ENCODE measurements at regions of chr22 and their contacts with region 1.

Region 1: GRCh38 chr22:31290494-31291471 is 1.5 kb downstream of the PIK3IP1 start:
- DNase-seq: peak; percentile 92
- H3K4me3 Mint-ChIP-seq: peak overlapping the region; percentile 97
- H3K27ac Mint-ChIP-seq: peak overlapping the region; percentile 100
- H3K4me1 Mint-ChIP-seq: peaks cover 65% of the 10 kb centered on the region
- H3K27me3 Mint-ChIP-seq: no peaks in the 10 kb centered on the region

Region 2: GRCh38 chr22:30742291-30743256 is 548.2 kb before region 1 on chr22:
- intact Hi-C with region 1: loop called (anchors 5 kb)
- DNase-seq: no peak
- H3K4me3 Mint-ChIP-seq: peak overlapping the region; percentile 31
- H3K27ac Mint-ChIP-seq: peak overlapping the region; percentile 96
- H3K4me1 Mint-ChIP-seq: peaks cover 65% of the 10 kb centered on the region
- H3K27me3 Mint-ChIP-seq: no peaks in the 10 kb centered on the region

Region 3: GRCh38 chr22:31107178-31107893 is 183.4 kb before region 1 on chr22 and contains the start of gene SELENOM:
- intact Hi-C with region 1: loop called (anchors 5 kb)
- DNase-seq: peak; percentile 83
- H3K4me3 Mint-ChIP-seq: peak within 1 kb of the TSS; percentile 85
- H3K27ac Mint-ChIP-seq: peak within 1 kb of the TSS; percentile 19
- H3K4me1 Mint-ChIP-seq: peaks cover 10% of the 10 kb centered on the region
- H3K27me3 Mint-ChIP-seq: peaks cover 3% of the 10 kb centered on the region
- total RNA-seq, gene SELENOM: 7.9 and 9.4 TPM in 2 replicates

Region 4: GRCh38 chr22:31313366-31314147 is 22.8 kb after region 1 on chr22:
- intact Hi-C with region 1: loop called (anchors 1 kb)
- DNase-seq: peak; percentile 32
- H3K4me3 Mint-ChIP-seq: no peak overlapping the region
- H3K27ac Mint-ChIP-seq: no peak overlapping the region
- H3K4me1 Mint-ChIP-seq: peaks cover 6% of the 10 kb centered on the region
- H3K27me3 Mint-ChIP-seq: no peaks in the 10 kb centered on the region

Region 5: GRCh38 chr22:31363885-31364465 is 73.2 kb after region 1 on chr22:
- intact Hi-C with region 1: no loop called
- DNase-seq: no peak
- H3K4me3 Mint-ChIP-seq: no peak overlapping the region
- H3K27ac Mint-ChIP-seq: no peak overlapping the region
- H3K4me1 Mint-ChIP-seq: peaks cover 3% of the 10 kb centered on the region
- H3K27me3 Mint-ChIP-seq: peaks cover 1% of the 10 kb centered on the region

Region 6: DNA sequence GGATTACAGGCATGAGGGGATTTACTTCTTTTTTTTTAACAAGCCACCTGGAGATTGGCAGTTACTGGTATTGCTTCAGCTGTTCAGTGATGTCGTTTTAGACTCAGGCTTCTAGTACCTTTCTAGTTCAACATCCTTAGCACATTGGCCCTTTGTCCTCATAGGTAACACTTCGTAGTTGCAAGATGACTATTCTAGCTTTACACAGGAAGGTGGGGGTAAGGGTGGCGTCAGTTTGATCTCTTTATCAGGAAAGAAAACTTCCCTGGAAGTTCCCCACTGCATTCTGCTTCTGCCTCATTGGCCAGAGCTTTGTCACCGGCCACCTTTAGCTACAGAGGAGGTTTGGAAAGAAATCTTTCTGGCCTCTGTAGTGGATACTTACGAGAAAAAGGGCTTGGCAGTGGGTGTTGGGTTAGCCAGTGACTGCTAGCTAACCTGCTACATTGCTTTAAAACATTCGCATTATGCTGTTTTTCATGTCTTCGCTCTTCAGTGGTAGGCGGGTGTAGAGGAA is 246.3 kb after region 1 on chr22:
- intact Hi-C with region 1: loop called (anchors 5 kb)
- DNase-seq: peak; percentile 26
- H3K4me3 Mint-ChIP-seq: peak overlapping the region; percentile 64
- H3K27ac Mint-ChIP-seq: peak overlapping the region; percentile 99
- H3K4me1 Mint-ChIP-seq: peaks cover 60% of the 10 kb centered on the region
- H3K27me3 Mint-ChIP-seq: no peaks in the 10 kb centered on the region

Region 7: GRCh38 chr22:31550866-31551390 is 260.1 kb after region 1 on chr22:
- intact Hi-C with region 1: no loop called
- DNase-seq: no peak
- H3K4me3 Mint-ChIP-seq: no peak overlapping the region
- H3K27ac Mint-ChIP-seq: peak overlapping the region; percentile 63
- H3K4me1 Mint-ChIP-seq: peaks cover 28% of the 10 kb centered on the region
- H3K27me3 Mint-ChIP-seq: no peaks in the 10 kb centered on the region

Measured in activated T-helper 2 cell treated with anti-CD3 and anti-CD28 coated beads, Interferon-gamma antibody, Interleukin-2, Interleukin-4, amounts not matched to agents 10 μg/mL and 5 μg/mL and 100 μg/mL, durations not matched to agents 14 hours and 24 hours and 36 hours (primary cell).